K562 (cell line): ENCODE measurements at regions of chr13 and their contacts with region 1.

Region 1: GRCh38 chr13:50529154-50529882 is 314.2 kb downstream of the DLEU7 start:
- DNase-seq: peak in 2 of 4 experiments; percentile 10 to 31
- ATAC-seq: peak; percentile 47; the same call in 2 of the 3 replicates
- H3K4me3 ChIP-seq: no peak overlapping the region
- H3K27ac ChIP-seq: no peak overlapping the region
- H3K4me1 ChIP-seq: peaks cover 4 to 7% of the 10 kb centered on the region in 2 experiments; a peak in 4 of 5 replicates
- H3K27me3 ChIP-seq: no peaks in the 10 kb centered on the region
- CTCF ChIP-seq: no peak
- EP300 ChIP-seq: no peak
- POLR2A ChIP-seq: no peak
- RAD21 ChIP-seq: no peak

Region 2: GRCh38 chr13:49976314-49977258 is 552.7 kb before region 1 on chr13:
- CTCF ChIA-PET with region 1: no interaction called
- POLR2A ChIA-PET with region 1: no interaction called
- in situ Hi-C with region 1: no loop called
- intact Hi-C with region 1: loop called (anchors 10 kb)
- DNase-seq: peak; percentile 59 to 77 (median 62)
- ATAC-seq: peak; percentile 90
- H3K4me3 ChIP-seq: no peak overlapping the region
- H3K27ac ChIP-seq: no peak overlapping the region
- H3K4me1 ChIP-seq: no peaks in the 10 kb centered on the region; a peak in 3 of 5 replicates
- H3K27me3 ChIP-seq: no peaks in the 10 kb centered on the region
- CTCF ChIP-seq: peak; percentile 67 to 82 (median 80)
- EP300 ChIP-seq: no peak
- POLR2A ChIP-seq: no peak
- RAD21 ChIP-seq: peak; percentile 76 to 90

Region 3: GRCh38 chr13:50731400-50731799 is 202.1 kb after region 1 on chr13:
- CTCF ChIA-PET with region 1: no interaction called
- POLR2A ChIA-PET with region 1: no interaction called
- in situ Hi-C with region 1: no loop called
- intact Hi-C with region 1: no loop called
- DNase-seq: no peak
- ATAC-seq: no peak
- H3K4me3 ChIP-seq: no peak overlapping the region
- H3K27ac ChIP-seq: no peak overlapping the region
- H3K4me1 ChIP-seq: no peaks in the 10 kb centered on the region
- H3K27me3 ChIP-seq: no peaks in the 10 kb centered on the region
- CTCF ChIP-seq: no peak
- EP300 ChIP-seq: no peak
- POLR2A ChIP-seq: no peak
- RAD21 ChIP-seq: no peak